ENCODE measurements at regions of chr9 and their contacts with region 1.

Region 1: DNA sequence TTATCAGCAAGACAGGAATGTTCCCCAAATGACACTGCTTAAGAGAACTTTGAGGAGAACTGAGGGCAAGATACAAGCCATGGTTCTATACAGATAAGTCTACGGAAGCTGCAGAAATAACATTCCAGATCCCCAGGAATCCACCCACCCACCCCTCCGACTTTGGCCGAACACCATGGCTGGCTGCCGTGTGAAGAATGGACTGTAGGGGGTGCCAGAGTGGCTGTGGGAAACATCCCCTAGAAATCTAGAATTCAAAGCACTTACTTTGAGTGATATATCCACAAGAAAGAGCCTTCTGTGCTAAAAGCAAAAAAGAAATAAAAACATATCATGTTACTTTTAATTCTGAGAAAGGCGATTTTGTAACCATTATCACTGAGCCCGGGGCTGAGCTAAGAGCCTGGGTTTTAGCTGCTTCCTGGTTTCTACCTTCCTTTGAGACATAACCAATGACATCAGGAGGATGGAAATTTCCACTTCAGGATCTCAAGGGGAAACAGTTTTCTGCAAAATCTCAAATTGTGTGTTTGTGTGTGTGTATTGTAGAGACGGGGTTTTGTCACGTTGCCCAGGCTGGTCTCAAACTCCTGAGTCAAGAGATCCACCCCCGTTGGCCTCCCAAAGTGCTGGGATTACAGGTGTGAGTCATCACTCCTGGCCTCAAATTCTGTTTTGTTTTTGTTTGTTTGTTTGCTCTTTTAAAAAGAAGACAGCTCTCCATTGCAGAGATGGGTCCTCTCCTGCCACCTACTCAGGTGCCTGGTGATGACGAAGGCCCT is 36.4 kb downstream of the GGTA1 start:
- DNase-seq: peak; percentile 46 to 63
- ATAC-seq: peak; percentile 40 to 76 (median 62)
- H3K4me3 ChIP-seq: no peak overlapping the region
- H3K27ac ChIP-seq: no peak overlapping the region
- H3K4me1 ChIP-seq: no peaks in the 10 kb centered on the region
- H3K27me3 ChIP-seq: peaks cover 0 to 6% (median 0%) of the 10 kb centered on the region in 3 donors
- CTCF ChIP-seq: peak; percentile 58

Region 2: GRCh38 chr9:120755827-120756434 is 707.3 kb before region 1 on chr9:
- intact Hi-C with region 1: no loop called
- DNase-seq: no peak
- ATAC-seq: peak; percentile 43 to 88 (median 65)
- H3K4me3 ChIP-seq: no peak overlapping the region
- H3K27ac ChIP-seq: no peak overlapping the region
- H3K4me1 ChIP-seq: peaks cover 3% of the 10 kb centered on the region
- H3K27me3 ChIP-seq: no peaks in the 10 kb centered on the region
- CTCF ChIP-seq: peak; percentile 88

Region 3: DNA sequence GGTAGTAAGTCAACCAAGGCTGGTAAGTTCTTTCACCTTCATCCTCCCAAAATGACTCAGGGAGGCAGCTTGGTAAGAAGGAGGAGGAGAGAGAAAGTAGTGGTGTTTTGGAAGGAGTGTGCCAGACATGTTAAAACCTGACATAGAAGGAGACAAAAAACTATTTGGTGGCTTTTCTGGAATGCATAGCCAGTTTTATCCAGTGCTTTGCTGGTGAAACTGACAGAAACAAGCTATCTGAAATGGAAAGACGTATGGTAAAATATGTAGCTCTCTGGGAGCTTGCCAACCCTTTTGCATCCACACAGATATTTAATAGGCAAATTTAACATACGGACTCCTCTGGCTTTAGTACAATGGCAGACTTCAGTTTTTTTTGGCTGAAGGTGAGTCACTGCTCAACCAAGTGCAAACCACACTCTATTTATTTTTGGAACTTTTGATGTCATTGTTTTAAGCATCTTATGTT is 306.9 kb before region 1 on chr9:
- intact Hi-C with region 1: no loop called
- DNase-seq: no peak
- ATAC-seq: no peak
- H3K4me3 ChIP-seq: no peak overlapping the region
- H3K27ac ChIP-seq: no peak overlapping the region
- H3K4me1 ChIP-seq: no peaks in the 10 kb centered on the region
- H3K27me3 ChIP-seq: no peaks in the 10 kb centered on the region
- CTCF ChIP-seq: no peak

Region 4: GRCh38 chr9:121498150-121498486 is 34.9 kb after region 1 on chr9:
- intact Hi-C with region 1: loop called in 1 of 2 experiments (anchors 5 kb)
- DNase-seq: no peak
- ATAC-seq: peak; percentile 74 to 84 (median 81)
- H3K4me3 ChIP-seq: peak overlapping the region; percentile 77
- H3K27ac ChIP-seq: no peak overlapping the region
- H3K4me1 ChIP-seq: peaks cover 16% of the 10 kb centered on the region
- H3K27me3 ChIP-seq: peaks cover 0 to 48% (median 3%) of the 10 kb centered on the region in 3 donors
- CTCF ChIP-seq: peak; percentile 68

Region 5: DNA sequence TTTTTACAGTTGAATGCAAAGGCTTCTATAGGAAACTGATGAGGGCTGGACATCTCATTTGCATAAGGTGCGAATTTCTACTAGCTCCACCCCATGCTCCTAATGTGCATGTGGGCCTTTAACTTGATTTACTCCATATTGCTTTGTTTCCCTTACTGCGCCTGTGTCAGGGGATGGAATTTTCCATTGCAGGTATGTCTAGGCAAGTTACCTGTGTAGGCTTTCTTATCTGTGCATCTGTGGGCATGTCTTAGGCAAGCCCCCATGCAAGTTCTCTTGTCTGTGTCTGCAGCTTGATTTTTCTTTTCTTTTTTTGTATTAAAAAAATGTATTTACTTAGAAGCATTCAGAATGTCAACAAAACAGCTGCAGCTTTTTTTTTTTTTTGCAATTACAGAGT is 55.8 kb after region 1 on chr9:
- intact Hi-C with region 1: no loop called
- DNase-seq: no peak
- ATAC-seq: no peak
- H3K4me3 ChIP-seq: no peak overlapping the region
- H3K27ac ChIP-seq: no peak overlapping the region
- H3K4me1 ChIP-seq: no peaks in the 10 kb centered on the region
- H3K27me3 ChIP-seq: no peaks in the 10 kb centered on the region
- CTCF ChIP-seq: no peak

Region 6: DNA sequence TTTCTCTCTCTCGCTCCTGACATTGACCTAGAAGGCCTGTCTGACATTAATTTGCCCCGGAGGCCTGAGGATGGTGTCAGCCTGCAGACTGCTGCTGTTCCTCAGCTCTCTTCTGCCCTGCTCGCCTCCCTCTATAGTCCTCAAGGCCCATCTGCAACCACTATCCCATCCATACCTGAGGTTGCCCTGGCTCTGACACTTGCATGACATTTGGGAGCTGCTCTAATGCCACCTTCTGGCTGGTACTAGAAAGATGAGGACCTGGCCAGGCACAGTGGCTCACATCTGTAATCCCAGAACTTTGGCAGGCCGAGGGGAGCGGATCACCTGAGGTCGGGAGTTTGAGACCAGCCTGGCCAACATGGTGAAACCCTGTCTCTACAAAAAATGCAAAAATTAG is 75.0 kb after region 1 on chr9:
- intact Hi-C with region 1: no loop called
- DNase-seq: no peak
- ATAC-seq: peak in 2 of 4 donors; percentile 40 to 55
- H3K4me3 ChIP-seq: no peak overlapping the region
- H3K27ac ChIP-seq: no peak overlapping the region
- H3K4me1 ChIP-seq: no peaks in the 10 kb centered on the region
- H3K27me3 ChIP-seq: no peaks in the 10 kb centered on the region
- CTCF ChIP-seq: no peak